Natural killer cell (primary cell): ENCODE measurements at regions of chr19 and their contacts with region 1.

Region 1: GRCh38 chr19:33235269-33235995 is 9.8 kb upstream of the SLC7A10 start:
- DNase-seq: peak; percentile 73 to 85
- ATAC-seq: peak; percentile 68 to 77 (median 71)
- H3K4me3 ChIP-seq: no peak overlapping the region
- H3K4me3 Mint-ChIP-seq: no peak overlapping the region
- H3K27ac ChIP-seq: no peak overlapping the region
- H3K27ac Mint-ChIP-seq: no peak overlapping the region
- H3K4me1 ChIP-seq: peaks cover 29% of the 10 kb centered on the region
- H3K4me1 Mint-ChIP-seq: peaks cover 0 to 22% of the 10 kb centered on the region in 2 donors
- H3K27me3 ChIP-seq: no peaks in the 10 kb centered on the region
- H3K27me3 Mint-ChIP-seq: peaks cover 6 to 10% of the 10 kb centered on the region in 2 donors
- CTCF ChIP-seq: peak; percentile 97

Region 2: GRCh38 chr19:33125929-33126388 is 109.5 kb before region 1 on chr19:
- intact Hi-C with region 1: no loop called
- DNase-seq: peak; percentile 30 to 84
- ATAC-seq: peak; percentile 81 to 97 (median 93)
- H3K4me3 ChIP-seq: no peak overlapping the region
- H3K4me3 Mint-ChIP-seq: no peak overlapping the region
- H3K27ac ChIP-seq: no peak overlapping the region
- H3K27ac Mint-ChIP-seq: no peak overlapping the region
- H3K4me1 ChIP-seq: peaks cover 4% of the 10 kb centered on the region
- H3K4me1 Mint-ChIP-seq: peaks cover 0 to 11% of the 10 kb centered on the region in 2 donors
- H3K27me3 ChIP-seq: no peaks in the 10 kb centered on the region
- H3K27me3 Mint-ChIP-seq: no peaks in the 10 kb centered on the region
- CTCF ChIP-seq: peak; percentile 87

Region 3: DNA sequence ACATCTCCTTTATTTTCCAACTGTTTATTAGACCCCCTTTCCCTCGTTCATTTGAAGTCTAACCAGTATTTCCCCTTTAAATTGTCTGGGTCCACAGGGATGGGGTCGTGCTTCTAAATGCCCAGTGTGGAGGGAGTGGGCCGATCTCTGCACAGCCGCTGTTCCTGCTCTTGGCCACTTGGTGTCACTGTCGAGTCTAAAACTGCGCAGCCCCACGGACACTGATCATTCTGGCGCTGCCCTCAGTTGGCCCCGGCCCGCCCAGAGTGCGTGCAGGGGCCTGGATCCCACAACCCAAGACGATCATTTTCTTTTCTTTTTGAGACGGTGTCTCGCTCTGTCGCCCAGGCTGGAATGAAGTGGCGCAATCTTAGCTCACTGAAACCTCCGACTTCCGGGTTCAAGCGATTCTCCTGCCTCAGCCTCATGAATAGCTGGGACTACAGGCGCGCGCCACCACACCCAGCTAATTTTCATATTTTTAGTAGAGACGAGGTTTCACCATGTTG is 91.5 kb before region 1 on chr19:
- intact Hi-C with region 1: loop called (anchors 1 kb)
- DNase-seq: peak; percentile 51 to 84
- ATAC-seq: peak; percentile 94 to 100 (median 100)
- H3K4me3 ChIP-seq: no peak overlapping the region
- H3K4me3 Mint-ChIP-seq: no peak overlapping the region
- H3K27ac ChIP-seq: no peak overlapping the region
- H3K27ac Mint-ChIP-seq: peak overlapping the region in 1 of 2 donors; percentile 13
- H3K4me1 ChIP-seq: peaks cover 5% of the 10 kb centered on the region
- H3K4me1 Mint-ChIP-seq: peaks cover 5 to 7% of the 10 kb centered on the region in 2 donors
- H3K27me3 ChIP-seq: no peaks in the 10 kb centered on the region
- H3K27me3 Mint-ChIP-seq: peaks cover 0 to 7% of the 10 kb centered on the region in 2 donors
- CTCF ChIP-seq: peak; percentile 96

Region 4: GRCh38 chr19:33302175-33302973 is 66.9 kb after region 1 on chr19 and contains the start of gene CEBPA:
- intact Hi-C with region 1: loop called (anchors 2 kb)
- DNase-seq: peak; percentile 74 to 81
- ATAC-seq: peak; percentile 90 to 94 (median 92)
- H3K4me3 ChIP-seq: peak within 1 kb of the TSS; percentile 57
- H3K4me3 Mint-ChIP-seq: peak within 1 kb of the TSS; percentile 84
- H3K27ac ChIP-seq: no peak within 1 kb of the TSS
- H3K27ac Mint-ChIP-seq: peak within 1 kb of the TSS in 1 of 2 donors; percentile 36
- H3K4me1 ChIP-seq: peaks cover 28% of the 10 kb centered on the region
- H3K4me1 Mint-ChIP-seq: peaks cover 8 to 20% of the 10 kb centered on the region in 2 donors
- H3K27me3 ChIP-seq: peaks cover 20% of the 10 kb centered on the region
- H3K27me3 Mint-ChIP-seq: peaks cover 0 to 17% of the 10 kb centered on the region in 2 donors
- CTCF ChIP-seq: peak; percentile 54
- total RNA-seq, gene CEBPA: 7.6 to 19.5 (median 8.2) TPM

Region 5: GRCh38 chr19:33406521-33407139 is 171.2 kb after region 1 on chr19:
- intact Hi-C with region 1: loop called (anchors 1 kb)
- DNase-seq: peak; percentile 76 to 85
- ATAC-seq: peak; percentile 79 to 92 (median 90)
- H3K4me3 ChIP-seq: no peak overlapping the region
- H3K4me3 Mint-ChIP-seq: no peak overlapping the region
- H3K27ac ChIP-seq: no peak overlapping the region
- H3K27ac Mint-ChIP-seq: no peak overlapping the region
- H3K4me1 ChIP-seq: peaks cover 7% of the 10 kb centered on the region
- H3K4me1 Mint-ChIP-seq: no peaks in the 10 kb centered on the region
- H3K27me3 ChIP-seq: no peaks in the 10 kb centered on the region
- H3K27me3 Mint-ChIP-seq: no peaks in the 10 kb centered on the region
- CTCF ChIP-seq: peak; percentile 92

Region 6: DNA sequence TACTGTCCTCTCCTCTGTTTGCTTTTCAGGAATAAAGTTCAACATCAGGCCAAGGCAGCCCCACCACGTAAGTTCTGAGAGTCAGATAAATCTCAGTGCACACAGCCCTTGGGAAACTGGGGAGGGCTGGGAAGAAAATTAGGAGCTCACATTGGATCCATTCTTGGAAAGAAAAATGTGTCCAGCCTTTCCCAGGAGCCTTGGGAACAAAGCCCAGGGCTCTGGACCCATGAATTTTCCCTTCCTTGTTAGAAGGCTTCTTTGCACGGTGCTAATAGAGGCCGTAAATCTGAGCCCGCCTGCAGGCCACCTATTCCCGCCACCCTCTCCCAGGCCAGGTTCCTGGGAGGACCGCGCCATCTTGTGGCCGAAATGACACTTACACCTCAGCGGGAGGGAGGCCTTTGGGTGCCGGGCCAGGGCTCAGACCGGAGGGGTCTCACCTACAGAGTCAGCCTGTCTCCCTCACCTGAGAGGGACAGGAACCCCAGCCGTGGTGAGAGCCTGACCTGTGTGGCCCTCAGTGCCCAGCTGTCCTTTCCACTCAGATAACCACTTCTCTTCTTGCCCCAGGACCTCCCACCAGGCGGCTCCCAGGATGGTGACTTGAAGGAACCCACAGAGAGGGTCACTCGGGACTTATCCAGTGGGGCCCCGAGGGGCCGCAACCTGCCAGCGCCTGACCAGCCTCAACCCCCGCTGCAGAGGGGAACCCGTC is 536.1 kb after region 1 on chr19:
- intact Hi-C with region 1: loop called (anchors 5 kb)
- DNase-seq: peak; percentile 47 to 75
- ATAC-seq: peak in 2 of 3 donors; percentile 73 to 80
- H3K4me3 ChIP-seq: no peak overlapping the region
- H3K4me3 Mint-ChIP-seq: no peak overlapping the region
- H3K27ac ChIP-seq: no peak overlapping the region
- H3K27ac Mint-ChIP-seq: no peak overlapping the region
- H3K4me1 ChIP-seq: no peaks in the 10 kb centered on the region
- H3K4me1 Mint-ChIP-seq: no peaks in the 10 kb centered on the region
- H3K27me3 ChIP-seq: no peaks in the 10 kb centered on the region
- H3K27me3 Mint-ChIP-seq: peaks cover 0 to 6% of the 10 kb centered on the region in 2 donors
- CTCF ChIP-seq: peak; percentile 41